ENCODE measurements at regions of chr12 and their contacts with region 1.

Region 1: DNA sequence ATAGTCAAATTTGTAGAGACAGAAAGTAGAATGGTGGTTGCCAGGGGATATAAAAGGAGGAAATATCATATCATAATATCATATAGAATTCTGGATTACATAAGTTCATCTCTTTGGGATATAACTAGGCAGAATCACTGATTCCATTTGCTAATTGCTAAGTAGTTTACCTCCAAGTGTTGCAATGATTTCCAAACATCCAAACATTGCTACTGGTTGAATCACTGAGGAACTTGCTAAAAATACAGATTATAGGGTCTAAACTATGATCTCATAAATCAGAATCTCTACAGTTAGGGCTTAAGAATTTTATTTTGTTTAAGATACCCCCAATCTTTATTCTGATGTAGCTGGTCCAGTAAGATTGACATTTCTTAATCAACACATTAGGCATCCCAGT is 16.1 kb upstream of the TAS2R42 start:
- DNase-seq: no peak
- ATAC-seq: no peak
- H3K4me3 ChIP-seq: no peak overlapping the region
- H3K27ac ChIP-seq: no peak overlapping the region
- H3K4me1 ChIP-seq: no peaks in the 10 kb centered on the region; a peak in 1 of 5 replicates
- H3K27me3 ChIP-seq: no peaks in the 10 kb centered on the region
- CTCF ChIP-seq: no peak
- EP300 ChIP-seq: no peak
- POLR2A ChIP-seq: no peak
- RAD21 ChIP-seq: no peak

Region 2: GRCh38 chr12:10771132-10771733 is 431.6 kb before region 1 on chr12:
- CTCF ChIA-PET with region 1: interaction called, 8 read pairs
- POLR2A ChIA-PET with region 1: no interaction called
- in situ Hi-C with region 1: loop called (anchors 10 kb)
- intact Hi-C with region 1: loop called (anchors 2 kb)
- DNase-seq: peak; percentile 5 to 17 (median 7)
- ATAC-seq: no peak
- H3K4me3 ChIP-seq: no peak overlapping the region
- H3K27ac ChIP-seq: no peak overlapping the region
- H3K4me1 ChIP-seq: no peaks in the 10 kb centered on the region
- H3K27me3 ChIP-seq: peaks cover 0 to 4% of the 10 kb centered on the region in 2 experiments; a peak in 1 of 5 replicates
- CTCF ChIP-seq: peak in 2 of 3 experiments; percentile 40 to 67; a peak in 3 of 6 replicates
- EP300 ChIP-seq: no peak
- POLR2A ChIP-seq: no peak
- RAD21 ChIP-seq: peak; percentile 55 to 78

Measured in K562 (cell line).